SK-N-SH (cell line): ENCODE measurements at regions of chr4 and their contacts with region 1.

Region 1: GRCh38 chr4:40924096-40924792 is 174.5 kb downstream of the NSUN7 start:
- DNase-seq: peak; percentile 83
- H3K4me3 ChIP-seq: peak overlapping the region in 1 of 2 experiments; percentile 10; a peak in 1 of 4 replicates
- H3K27ac ChIP-seq: no peak overlapping the region
- H3K4me1 ChIP-seq: no peaks in the 10 kb centered on the region; a peak in 1 of 4 replicates
- H3K27me3 ChIP-seq: no peaks in the 10 kb centered on the region
- CTCF ChIP-seq: peak; percentile 94
- EP300 ChIP-seq: no peak
- RAD21 ChIP-seq: peak; percentile 79

Region 2: GRCh38 chr4:40736910-40737309 is 187.3 kb before region 1 on chr4:
- CTCF ChIA-PET with region 1: interaction called, 31 read pairs
- POLR2A ChIA-PET with region 1: no interaction called
- DNase-seq: peak; percentile 53
- H3K4me3 ChIP-seq: no peak overlapping the region
- H3K27ac ChIP-seq: no peak overlapping the region
- H3K4me1 ChIP-seq: no peaks in the 10 kb centered on the region
- H3K27me3 ChIP-seq: no peaks in the 10 kb centered on the region
- CTCF ChIP-seq: peak; percentile 65
- EP300 ChIP-seq: no peak
- RAD21 ChIP-seq: peak; percentile 84

Region 3: GRCh38 chr4:40908702-40909362 is 15.4 kb before region 1 on chr4:
- CTCF ChIA-PET with region 1: interaction called, 192 read pairs
- POLR2A ChIA-PET with region 1: no interaction called
- DNase-seq: peak; percentile 77
- H3K4me3 ChIP-seq: peak overlapping the region in 1 of 2 experiments; percentile 43; a peak in 1 of 4 replicates
- H3K27ac ChIP-seq: peak overlapping the region; percentile 83 to 92
- H3K4me1 ChIP-seq: peaks cover 13 to 24% of the 10 kb centered on the region in 2 experiments
- H3K27me3 ChIP-seq: no peaks in the 10 kb centered on the region
- CTCF ChIP-seq: peak; percentile 96
- EP300 ChIP-seq: no peak
- RAD21 ChIP-seq: peak; percentile 80

Region 4: DNA sequence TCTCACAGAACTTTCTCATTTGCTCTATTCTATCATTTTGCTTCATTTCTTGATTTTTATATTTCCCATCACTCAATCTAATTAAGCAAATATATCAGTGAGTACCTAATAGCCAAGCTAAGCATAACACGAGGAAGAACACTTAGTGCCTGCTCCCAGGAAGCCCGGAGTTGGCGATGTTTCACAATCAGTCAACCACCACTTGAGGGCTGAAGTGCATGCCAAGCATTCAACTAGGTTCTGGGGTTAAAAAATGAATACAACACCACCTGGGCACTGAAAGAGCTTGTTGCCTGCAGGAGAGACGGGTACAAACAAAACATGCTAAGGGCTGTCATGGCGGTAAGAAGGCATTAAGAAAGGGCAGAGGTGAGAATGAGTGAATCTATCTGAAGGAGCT is 380.0 kb after region 1 on chr4:
- CTCF ChIA-PET with region 1: no interaction called
- POLR2A ChIA-PET with region 1: no interaction called
- DNase-seq: no peak
- H3K4me3 ChIP-seq: no peak overlapping the region
- H3K27ac ChIP-seq: no peak overlapping the region
- H3K4me1 ChIP-seq: no peaks in the 10 kb centered on the region
- H3K27me3 ChIP-seq: no peaks in the 10 kb centered on the region; the same call in 1 of the 2 replicates
- CTCF ChIP-seq: no peak
- EP300 ChIP-seq: no peak
- RAD21 ChIP-seq: no peak